Activated CD4-positive, alpha-beta T cell treated with anti-CD3 and anti-CD28 coated beads for 36 hours (primary cell): ENCODE measurements at regions of chr3 and their contacts with region 1.

Region 1: DNA sequence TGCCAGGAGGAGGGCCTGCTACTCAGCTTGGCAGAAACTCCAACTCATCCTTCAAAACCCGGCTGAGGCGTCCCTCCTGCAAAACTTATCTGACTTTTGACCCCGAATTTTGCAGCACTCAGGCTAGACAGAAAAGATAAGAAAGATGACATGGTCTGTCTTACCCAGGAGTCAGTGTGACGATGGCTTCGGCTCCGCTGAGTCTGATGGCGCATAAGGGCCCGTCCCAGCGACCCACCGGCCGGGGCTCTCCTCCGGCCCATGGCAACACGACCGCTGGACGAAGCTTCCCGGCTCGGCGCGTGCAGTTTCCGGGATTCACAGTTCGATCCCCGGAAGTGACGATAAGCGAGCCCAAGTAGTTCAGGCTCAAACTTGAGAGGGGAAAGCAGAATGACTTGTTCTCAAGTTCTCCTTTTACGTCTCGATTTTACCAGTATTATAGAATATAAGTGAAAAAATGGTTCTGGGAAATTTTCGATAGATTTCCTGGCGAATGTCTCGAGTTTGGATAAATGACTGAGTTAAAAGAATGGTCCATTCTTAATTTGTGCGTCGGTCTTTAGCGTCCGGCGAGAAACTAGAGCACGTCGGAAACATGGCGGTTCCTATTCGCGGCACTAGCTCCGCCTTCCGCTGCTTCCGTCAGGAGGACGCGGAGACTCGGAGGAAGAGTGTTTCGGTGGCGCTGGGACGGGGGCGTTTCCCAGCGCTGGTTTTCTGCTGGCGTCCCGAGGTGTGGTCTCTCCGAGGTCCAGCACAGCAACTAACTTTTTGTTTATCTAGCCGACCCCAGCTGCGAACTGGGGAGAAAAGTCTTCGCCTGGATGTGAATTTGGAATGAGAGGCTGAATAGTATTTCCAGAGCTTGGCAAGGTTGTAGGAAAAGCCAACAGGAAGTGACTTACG is at the start of gene LSG1:
- DNase-seq: peak; percentile 94
- ATAC-seq: peak; percentile 84
- H3K4me3 Mint-ChIP-seq: peak within 1 kb of the TSS; percentile 100
- H3K27ac Mint-ChIP-seq: peak within 1 kb of the TSS; percentile 96
- H3K4me1 Mint-ChIP-seq: peaks cover 59% of the 10 kb centered on the region
- H3K27me3 Mint-ChIP-seq: peaks cover 6% of the 10 kb centered on the region
- total RNA-seq, gene LSG1: 41.4 to 43.9 TPM

Region 2: GRCh38 chr3:194134757-194135528 is 537.2 kb before region 1 on chr3:
- CTCF ChIA-PET with region 1: no interaction called
- POLR2A ChIA-PET with region 1: no interaction called
- intact Hi-C with region 1: loop called in 1 of 2 experiments (anchors 5 kb)
- DNase-seq: peak; percentile 92
- ATAC-seq: peak; percentile 67
- H3K4me3 Mint-ChIP-seq: peak overlapping the region; percentile 72
- H3K27ac Mint-ChIP-seq: peak overlapping the region; percentile 39
- H3K4me1 Mint-ChIP-seq: peaks cover 45% of the 10 kb centered on the region
- H3K27me3 Mint-ChIP-seq: peaks cover 60% of the 10 kb centered on the region

Region 3: GRCh38 chr3:194654443-194654842 is 17.7 kb before region 1 on chr3:
- CTCF ChIA-PET with region 1: interaction called, 44 read pairs
- POLR2A ChIA-PET with region 1: no interaction called
- intact Hi-C with region 1: no loop called
- DNase-seq: peak; percentile 32
- ATAC-seq: peak; percentile 89
- H3K4me3 Mint-ChIP-seq: peak overlapping the region; percentile 39
- H3K27ac Mint-ChIP-seq: peak overlapping the region; percentile 90
- H3K4me1 Mint-ChIP-seq: peaks cover 18% of the 10 kb centered on the region
- H3K27me3 Mint-ChIP-seq: no peaks in the 10 kb centered on the region

Region 4: GRCh38 chr3:194769020-194769643 is 97.0 kb after region 1 on chr3:
- CTCF ChIA-PET with region 1: no interaction called
- POLR2A ChIA-PET with region 1: no interaction called
- intact Hi-C with region 1: loop called (anchors 1 kb)
- DNase-seq: peak; percentile 96
- ATAC-seq: peak; percentile 99
- H3K4me3 Mint-ChIP-seq: peak overlapping the region; percentile 76
- H3K27ac Mint-ChIP-seq: peak overlapping the region; percentile 91
- H3K4me1 Mint-ChIP-seq: peaks cover 17% of the 10 kb centered on the region
- H3K27me3 Mint-ChIP-seq: peaks cover 9% of the 10 kb centered on the region

Region 5: DNA sequence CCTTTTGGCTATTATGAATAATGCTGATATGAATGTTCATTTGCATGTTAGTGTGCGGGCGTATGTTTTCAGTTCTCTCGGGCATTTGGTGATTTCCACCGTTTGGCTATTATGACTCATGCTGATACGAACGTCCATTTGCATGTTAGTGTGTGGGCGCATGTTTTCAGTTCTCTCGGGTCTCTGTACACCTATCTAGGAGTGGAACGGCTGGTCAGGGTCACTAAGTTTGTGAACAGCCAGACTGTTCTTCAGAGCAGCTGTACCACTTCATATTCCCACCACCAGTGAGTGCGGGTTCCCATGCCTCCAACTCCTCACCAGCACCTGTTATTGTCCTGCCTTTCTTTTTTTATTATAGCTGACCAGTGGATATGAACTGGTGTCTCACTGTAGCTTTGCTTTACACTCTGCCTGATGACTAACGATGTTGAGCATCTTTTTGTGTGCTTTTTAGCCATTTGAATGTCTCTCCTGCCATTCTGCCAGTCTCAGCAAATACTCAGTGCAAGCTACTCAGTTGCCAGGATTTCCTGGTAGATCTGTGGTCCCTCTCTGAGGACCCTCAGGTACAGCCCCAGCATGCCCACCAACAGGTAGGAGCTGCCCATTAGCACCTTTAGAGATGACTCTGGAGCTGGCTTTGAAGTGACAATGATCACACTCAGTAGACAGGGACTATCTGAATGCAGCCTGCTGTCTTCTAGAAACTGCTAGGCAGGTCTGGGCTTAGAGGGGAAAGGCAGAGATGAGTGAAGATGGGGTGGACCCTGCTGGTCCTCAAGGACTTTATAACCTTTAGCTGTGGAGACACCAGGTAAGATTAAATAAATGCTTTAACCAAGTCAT is 457.7 kb after region 1 on chr3:
- CTCF ChIA-PET with region 1: no interaction called
- POLR2A ChIA-PET with region 1: no interaction called
- intact Hi-C with region 1: loop called in 1 of 2 experiments (anchors 1 kb)
- DNase-seq: peak; percentile 64
- ATAC-seq: peak; percentile 67
- H3K4me3 Mint-ChIP-seq: peak overlapping the region; percentile 54
- H3K27ac Mint-ChIP-seq: peak overlapping the region; percentile 90
- H3K4me1 Mint-ChIP-seq: peaks cover 39% of the 10 kb centered on the region
- H3K27me3 Mint-ChIP-seq: no peaks in the 10 kb centered on the region

Region 6: DNA sequence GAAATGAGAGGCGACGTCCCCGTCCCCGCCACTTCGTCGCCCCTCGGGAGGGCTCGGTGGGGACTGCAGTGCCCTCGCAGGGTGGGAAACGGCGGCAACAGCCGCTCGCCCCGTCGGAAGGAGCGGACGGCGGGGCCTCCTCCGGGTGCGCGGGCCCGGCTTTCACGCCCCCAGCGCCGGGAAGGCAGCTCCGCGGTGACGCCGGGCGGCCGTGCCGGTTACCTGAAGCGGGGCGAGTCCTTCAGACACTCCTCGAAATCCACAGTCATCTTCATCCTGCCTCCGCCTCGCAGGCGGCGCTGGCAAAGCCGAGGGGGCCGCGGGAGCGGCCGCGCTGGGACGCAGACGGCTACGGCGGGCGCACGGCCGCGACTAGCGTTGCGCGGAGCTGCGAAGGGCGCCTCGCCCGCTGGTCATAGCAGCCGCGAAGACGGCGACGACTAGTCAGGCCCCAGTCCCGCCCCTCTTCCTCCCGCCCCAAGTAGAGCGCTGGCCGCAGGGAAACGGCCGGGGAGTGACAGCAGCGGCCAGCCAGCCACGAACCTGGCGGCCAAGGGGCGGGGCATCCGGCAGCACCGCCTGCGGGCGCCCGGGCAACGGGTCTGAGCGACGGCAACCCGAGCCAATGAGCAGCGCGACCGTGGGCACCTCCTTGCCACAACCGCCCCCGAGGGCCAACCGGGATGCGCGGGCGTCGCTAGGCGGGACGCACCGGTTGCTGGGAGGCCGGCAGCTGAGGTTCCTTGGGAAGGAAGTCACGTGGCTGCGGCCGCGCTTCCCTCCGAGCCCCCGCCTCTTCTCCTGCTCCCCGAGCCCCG is 770.6 kb after region 1 on chr3 and contains the start of gene ACAP2:
- CTCF ChIA-PET with region 1: no interaction called
- POLR2A ChIA-PET with region 1: no interaction called
- intact Hi-C with region 1: loop called in 1 of 2 experiments (anchors 1 kb)
- DNase-seq: peak; percentile 99
- ATAC-seq: peak; percentile 96
- H3K4me3 Mint-ChIP-seq: peak within 1 kb of the TSS; percentile 96
- H3K27ac Mint-ChIP-seq: peak within 1 kb of the TSS; percentile 91
- H3K4me1 Mint-ChIP-seq: peaks cover 44% of the 10 kb centered on the region
- H3K27me3 Mint-ChIP-seq: no peaks in the 10 kb centered on the region
- total RNA-seq, gene ACAP2: 43.7 to 51.9 TPM